Prostate gland (tissue), 2 donors: ENCODE measurements at regions of chr15 and their contacts with region 1.

Region 1: GRCh38 chr15:57866149-57866736 is 159.7 kb downstream of the POLR2M start:
- DNase-seq: peak; percentile 38
- H3K4me3 ChIP-seq: no peak overlapping the region
- H3K27ac ChIP-seq: no peak overlapping the region
- H3K4me1 ChIP-seq: no peaks in the 10 kb centered on the region
- H3K27me3 ChIP-seq: no peaks in the 10 kb centered on the region
- CTCF ChIP-seq: peak in 3 of 4 experiments; percentile 42 to 58 (median 49)
- POLR2A ChIP-seq: no peak

Region 2: DNA sequence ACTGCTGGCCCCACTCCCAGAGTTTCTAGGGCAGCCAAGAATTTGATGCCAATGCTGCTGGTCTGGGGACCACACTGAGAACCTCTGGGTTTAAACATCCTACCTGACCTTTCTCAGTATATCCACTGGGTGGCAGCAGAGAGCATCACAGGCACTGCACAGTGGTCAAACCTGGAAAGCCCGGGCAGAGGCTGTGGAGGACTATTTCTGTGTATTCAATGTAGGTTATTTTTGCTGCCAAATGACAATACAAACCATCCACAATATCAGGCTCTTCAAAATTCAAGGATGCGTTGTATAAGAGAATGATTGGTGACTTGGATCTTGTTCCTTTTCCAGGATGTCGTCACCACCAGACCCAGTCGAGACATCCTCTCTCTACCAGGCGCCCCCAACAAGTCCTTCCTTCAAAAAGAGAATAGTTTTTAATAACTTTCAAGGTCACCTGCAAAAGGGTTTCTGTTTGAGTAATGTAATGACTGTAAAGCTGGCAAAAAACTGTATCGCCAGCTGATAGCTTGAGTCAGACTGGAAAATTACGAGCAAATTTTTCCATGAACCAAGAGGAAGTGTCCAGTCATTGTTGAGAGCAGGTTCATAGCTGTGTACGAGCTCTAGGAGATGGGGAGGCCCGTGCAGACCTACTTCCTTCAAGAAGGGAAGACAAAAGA is 305.1 kb before region 1 on chr15:
- intact Hi-C with region 1: loop called (anchors 10 kb)
- DNase-seq: peak; percentile 78
- H3K4me3 ChIP-seq: no peak overlapping the region
- H3K27ac ChIP-seq: no peak overlapping the region
- H3K4me1 ChIP-seq: no peaks in the 10 kb centered on the region
- H3K27me3 ChIP-seq: no peaks in the 10 kb centered on the region
- CTCF ChIP-seq: peak; percentile 73 to 94 (median 92)
- POLR2A ChIP-seq: no peak

Region 3: DNA sequence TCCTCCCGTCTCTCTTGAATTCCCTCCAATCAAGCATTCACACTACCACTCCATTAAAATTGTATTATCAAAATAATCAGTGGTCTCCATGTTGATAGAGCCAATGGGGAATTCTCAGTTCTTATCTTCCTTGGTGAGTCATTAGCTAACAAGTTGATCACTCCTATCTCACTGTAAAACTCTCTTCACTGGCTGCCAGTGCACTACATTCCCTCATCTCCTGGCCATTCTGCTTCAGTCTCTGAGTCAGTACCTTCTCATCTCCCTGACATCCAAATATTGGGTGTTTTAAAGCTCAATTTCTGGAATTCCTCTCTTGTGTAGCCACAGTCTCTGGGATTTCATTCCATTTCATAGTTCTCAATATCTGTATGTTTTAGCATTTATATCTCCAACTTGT is 24.1 kb after region 1 on chr15:
- intact Hi-C with region 1: no loop called
- DNase-seq: no peak
- H3K4me3 ChIP-seq: no peak overlapping the region
- H3K27ac ChIP-seq: no peak overlapping the region
- H3K4me1 ChIP-seq: no peaks in the 10 kb centered on the region
- H3K27me3 ChIP-seq: no peaks in the 10 kb centered on the region
- CTCF ChIP-seq: no peak
- POLR2A ChIP-seq: no peak

Region 4: GRCh38 chr15:57943766-57944420 is 77.7 kb after region 1 on chr15:
- intact Hi-C with region 1: no loop called
- DNase-seq: no peak
- H3K4me3 ChIP-seq: no peak overlapping the region
- H3K27ac ChIP-seq: no peak overlapping the region
- H3K4me1 ChIP-seq: no peaks in the 10 kb centered on the region
- H3K27me3 ChIP-seq: no peaks in the 10 kb centered on the region
- CTCF ChIP-seq: no peak
- POLR2A ChIP-seq: no peak